Activated CD4-positive, alpha-beta T cell treated with anti-CD3 and anti-CD28 coated beads for 36 hours (primary cell): ENCODE measurements at regions of chr20 and their contacts with region 1.

Region 1: GRCh38 chr20:21395666-21396598 is 1.4 kb downstream of the NKX2-4 start:
- DNase-seq: peak; percentile 67
- ATAC-seq: peak; percentile 76
- H3K4me3 Mint-ChIP-seq: peak overlapping the region; percentile 40
- H3K27ac Mint-ChIP-seq: no peak overlapping the region
- H3K4me1 Mint-ChIP-seq: peaks cover 24% of the 10 kb centered on the region
- H3K27me3 Mint-ChIP-seq: peaks cover 62% of the 10 kb centered on the region

Region 2: DNA sequence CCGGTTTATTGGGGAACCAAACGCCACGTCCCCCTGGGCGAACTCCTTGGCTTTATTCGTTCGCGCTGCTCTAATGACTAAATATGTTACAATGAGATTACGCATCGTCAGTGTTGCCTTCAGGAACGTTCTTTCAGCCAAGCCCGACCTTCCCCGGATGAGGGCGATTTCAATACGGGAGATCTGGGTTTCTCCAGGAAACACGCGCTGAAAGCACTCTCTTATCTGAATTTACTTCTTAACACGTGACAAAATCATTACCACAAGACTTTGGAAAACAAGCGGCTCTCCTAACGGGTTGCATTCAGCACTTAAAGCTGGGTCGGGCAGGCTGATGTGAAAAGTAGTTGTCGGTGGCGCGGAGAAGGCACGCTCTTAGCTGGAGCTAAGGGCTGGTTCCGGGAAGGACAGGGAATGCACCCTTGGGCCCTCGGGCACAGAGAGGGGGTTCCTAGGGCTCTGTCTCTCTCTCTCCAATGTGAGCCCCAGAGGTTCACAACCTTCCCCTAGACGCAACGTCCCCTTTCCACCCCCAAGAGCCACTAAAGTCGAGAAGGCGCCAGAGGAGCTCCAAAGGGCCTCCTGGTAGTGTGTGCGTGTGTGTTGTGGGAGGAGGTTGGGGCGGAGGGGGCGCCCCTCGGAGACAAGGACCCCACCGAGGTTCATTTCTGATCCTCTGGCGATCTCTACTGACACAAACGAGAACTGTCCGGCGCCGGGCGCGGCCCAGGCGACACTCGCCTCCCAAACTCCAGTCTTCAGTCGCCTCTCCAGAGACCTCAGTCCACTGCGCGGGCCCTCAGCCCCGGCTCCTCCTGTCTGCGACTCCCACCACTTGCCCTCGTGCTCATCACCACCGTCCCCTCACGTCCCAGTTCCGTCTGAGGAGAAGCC is 125.0 kb after region 1 on chr20:
- CTCF ChIA-PET with region 1: interaction called, 4 read pairs
- POLR2A ChIA-PET with region 1: no interaction called
- intact Hi-C with region 1: loop called in 1 of 2 experiments (anchors 1 kb)
- DNase-seq: peak; percentile 23
- ATAC-seq: no peak
- H3K4me3 Mint-ChIP-seq: no peak overlapping the region
- H3K27ac Mint-ChIP-seq: no peak overlapping the region
- H3K4me1 Mint-ChIP-seq: peaks cover 26% of the 10 kb centered on the region
- H3K27me3 Mint-ChIP-seq: peaks cover 86% of the 10 kb centered on the region